Mammary epithelial cell (primary cell): ENCODE measurements at regions of chr3 and their contacts with region 1.

Region 1: DNA sequence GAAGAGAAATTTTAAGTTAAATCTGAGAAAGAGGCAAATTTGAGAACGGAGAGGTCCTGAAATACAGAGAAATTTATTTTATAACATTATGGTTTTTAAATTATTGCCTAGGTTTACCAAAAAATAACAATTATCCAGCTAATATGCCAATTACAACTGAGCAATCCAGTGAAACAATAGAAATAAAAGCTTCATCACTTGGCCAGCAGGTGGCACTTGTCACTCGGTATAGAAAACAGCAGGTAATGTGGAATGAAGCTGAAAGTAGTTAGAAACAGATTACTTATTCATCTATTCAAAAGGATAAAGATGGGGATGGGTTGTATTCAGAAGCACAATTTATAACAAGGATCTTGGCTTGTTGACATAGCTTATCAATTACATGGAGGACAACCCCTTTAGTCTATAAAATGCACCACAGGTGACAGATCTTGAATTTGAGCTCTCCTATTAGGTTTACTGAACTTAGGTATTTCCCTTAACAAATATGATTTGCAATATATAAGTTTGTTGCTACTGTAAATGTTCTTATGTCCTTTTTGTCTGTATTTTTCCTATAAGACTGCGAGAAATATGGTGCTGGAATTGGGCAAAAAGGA is 70.1 kb upstream of the GUCA1C start:
- DNase-seq: peak; percentile 18
- H3K4me3 ChIP-seq: no peak overlapping the region
- H3K27ac ChIP-seq: no peak overlapping the region
- H3K4me1 ChIP-seq: no peaks in the 10 kb centered on the region
- H3K27me3 ChIP-seq: peaks cover 1% of the 10 kb centered on the region
- CTCF ChIP-seq: peak; percentile 70 to 79

Region 2: GRCh38 chr3:108602249-108602934 is 421.4 kb before region 1 on chr3:
- CTCF ChIA-PET with region 1: no interaction called
- dilution Hi-C with region 1: no loop called
- in situ Hi-C with region 1: no loop called
- intact Hi-C with region 1: no loop called
- DNase-seq: no peak
- H3K4me3 ChIP-seq: no peak overlapping the region
- H3K27ac ChIP-seq: no peak overlapping the region
- H3K4me1 ChIP-seq: peaks cover 4% of the 10 kb centered on the region
- H3K27me3 ChIP-seq: no peaks in the 10 kb centered on the region
- CTCF ChIP-seq: no peak

Region 3: GRCh38 chr3:108946292-108947290 is 77.2 kb before region 1 on chr3:
- CTCF ChIA-PET with region 1: no interaction called
- dilution Hi-C with region 1: no loop called
- in situ Hi-C with region 1: no loop called
- intact Hi-C with region 1: no loop called
- DNase-seq: peak; percentile 90
- H3K4me3 ChIP-seq: peak overlapping the region in 1 of 3 experiments; percentile 22
- H3K27ac ChIP-seq: peak overlapping the region; percentile 61
- H3K4me1 ChIP-seq: peaks cover 14% of the 10 kb centered on the region
- H3K27me3 ChIP-seq: no peaks in the 10 kb centered on the region
- CTCF ChIP-seq: no peak

Region 4: DNA sequence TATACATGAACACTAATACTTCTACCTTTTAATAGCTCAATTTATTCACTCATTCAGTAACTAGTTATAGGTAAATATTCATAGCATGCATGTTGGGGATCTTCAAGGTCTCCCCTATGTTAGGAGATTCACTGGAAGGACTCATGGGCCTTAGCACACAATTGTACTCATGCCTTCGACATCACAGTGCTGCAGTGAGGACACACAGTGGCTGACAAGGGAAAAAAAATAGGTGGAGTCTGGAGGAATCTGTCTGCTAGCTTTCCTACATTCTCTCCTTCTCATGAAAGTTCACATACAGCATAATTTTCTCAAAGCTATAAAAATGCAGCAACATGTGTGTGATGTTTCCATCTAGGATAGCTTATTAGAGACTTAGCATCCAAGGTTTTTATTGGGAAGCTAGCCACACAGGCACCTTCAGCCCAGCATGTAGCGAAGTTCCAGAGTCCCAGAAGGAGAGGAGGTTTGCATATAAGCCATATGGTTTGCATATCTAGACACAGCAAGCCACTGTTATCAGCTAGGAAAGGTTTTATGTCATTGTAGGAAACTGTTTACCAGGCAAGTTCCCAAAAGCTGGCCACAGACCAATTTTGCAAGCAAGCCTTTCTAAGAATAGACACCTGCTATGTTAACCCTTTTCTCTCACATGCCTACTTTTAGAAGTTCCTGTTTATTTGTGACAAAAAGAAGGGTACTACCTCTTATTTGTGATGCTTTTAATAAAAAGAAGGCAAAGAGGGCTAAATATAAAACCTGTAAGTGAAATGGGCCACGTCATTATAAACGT is 47.8 kb after region 1 on chr3:
- CTCF ChIA-PET with region 1: no interaction called
- dilution Hi-C with region 1: no loop called
- in situ Hi-C with region 1: no loop called
- intact Hi-C with region 1: loop called (anchors 2 kb)
- DNase-seq: peak; percentile 4
- H3K4me3 ChIP-seq: no peak overlapping the region
- H3K27ac ChIP-seq: no peak overlapping the region
- H3K4me1 ChIP-seq: no peaks in the 10 kb centered on the region
- H3K27me3 ChIP-seq: no peaks in the 10 kb centered on the region
- CTCF ChIP-seq: peak; percentile 5 to 21

Region 5: GRCh38 chr3:109081746-109082510 is 58.2 kb after region 1 on chr3:
- CTCF ChIA-PET with region 1: interaction called, 3 read pairs
- dilution Hi-C with region 1: no loop called
- in situ Hi-C with region 1: no loop called
- intact Hi-C with region 1: loop called (anchors 1 kb)
- DNase-seq: peak; percentile 75
- H3K4me3 ChIP-seq: no peak overlapping the region
- H3K27ac ChIP-seq: no peak overlapping the region
- H3K4me1 ChIP-seq: no peaks in the 10 kb centered on the region
- H3K27me3 ChIP-seq: no peaks in the 10 kb centered on the region
- CTCF ChIP-seq: peak; percentile 85 to 88

Region 6: DNA sequence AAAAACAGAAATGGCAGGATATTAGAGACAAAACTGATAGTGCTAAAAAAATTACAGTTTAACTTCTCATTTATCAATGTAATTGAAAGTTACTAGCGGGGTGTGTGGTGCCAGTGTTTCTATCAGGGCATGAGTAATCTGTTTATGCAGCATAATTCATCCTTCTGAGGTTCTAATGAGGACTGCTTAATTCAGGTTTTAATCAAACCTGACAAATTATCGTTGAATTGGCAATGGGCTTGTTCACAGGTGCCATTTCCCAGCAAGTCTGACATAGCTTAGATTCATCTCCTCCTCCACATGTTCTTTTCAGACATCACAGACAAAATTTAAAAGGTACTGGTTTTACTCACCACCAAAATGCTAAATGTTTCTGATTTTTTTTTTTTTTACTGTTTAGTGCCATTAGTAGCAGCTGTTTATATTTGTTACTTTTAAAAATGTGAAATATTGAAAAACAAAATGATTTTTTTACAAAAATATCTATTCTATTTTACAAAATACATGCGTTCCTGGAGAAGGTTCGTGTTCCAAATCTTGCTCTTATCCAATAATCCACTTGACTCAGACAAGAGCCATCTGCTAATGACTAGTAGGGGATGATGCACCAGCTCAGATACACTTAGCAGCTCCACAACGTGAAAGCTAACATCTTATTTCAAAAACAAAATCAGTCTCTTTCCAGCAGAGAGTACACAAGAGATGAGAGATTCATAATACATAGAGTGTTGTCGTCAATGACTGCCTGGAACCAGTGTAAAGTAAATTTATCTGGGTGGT is 761.3 kb after region 1 on chr3:
- CTCF ChIA-PET with region 1: no interaction called
- dilution Hi-C with region 1: no loop called
- in situ Hi-C with region 1: no loop called
- intact Hi-C with region 1: no loop called
- DNase-seq: no peak
- H3K4me3 ChIP-seq: no peak overlapping the region
- H3K27ac ChIP-seq: no peak overlapping the region
- H3K4me1 ChIP-seq: no peaks in the 10 kb centered on the region
- H3K27me3 ChIP-seq: no peaks in the 10 kb centered on the region
- CTCF ChIP-seq: no peak